Vagina (tissue), 2 donors: ENCODE measurements at regions of chr7 and their contacts with region 1.

Region 1: GRCh38 chr7:38902449-38902848 is 6.5 kb downstream of the VPS41 start:
- DNase-seq: no peak
- H3K4me3 ChIP-seq: no peak overlapping the region
- H3K27ac ChIP-seq: no peak overlapping the region
- H3K4me1 ChIP-seq: no peaks in the 10 kb centered on the region
- H3K27me3 ChIP-seq: no peaks in the 10 kb centered on the region
- CTCF ChIP-seq: no peak
- POLR2A ChIP-seq: no peak

Region 2: DNA sequence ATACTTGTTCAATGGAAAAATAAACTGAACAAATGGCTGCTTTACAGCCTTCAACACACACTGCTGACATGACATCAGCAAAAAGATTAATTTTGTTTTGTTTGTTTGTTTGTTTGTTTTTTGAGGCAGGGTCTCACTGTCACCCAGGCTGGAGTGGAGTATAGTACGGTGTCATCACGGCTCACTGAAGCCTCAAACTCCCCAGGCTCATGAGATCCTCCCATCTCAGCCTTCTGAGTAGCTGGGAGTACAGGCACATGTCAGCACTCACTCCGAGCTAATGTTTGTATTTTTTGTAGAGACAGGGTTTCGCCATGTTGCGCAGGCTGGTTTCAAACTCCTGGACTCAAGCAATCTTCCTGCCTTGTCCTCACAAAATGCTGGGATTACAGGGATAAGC is 639.9 kb before region 1 on chr7:
- intact Hi-C with region 1: no loop called
- DNase-seq: no peak
- H3K4me3 ChIP-seq: no peak overlapping the region
- H3K27ac ChIP-seq: no peak overlapping the region
- H3K4me1 ChIP-seq: no peaks in the 10 kb centered on the region
- H3K27me3 ChIP-seq: no peaks in the 10 kb centered on the region
- CTCF ChIP-seq: no peak
- POLR2A ChIP-seq: no peak

Region 3: GRCh38 chr7:38728145-38728544 is 174.3 kb before region 1 on chr7:
- intact Hi-C with region 1: loop called (anchors 5 kb)
- DNase-seq: no peak
- H3K4me3 ChIP-seq: no peak overlapping the region
- H3K27ac ChIP-seq: no peak overlapping the region
- H3K4me1 ChIP-seq: no peaks in the 10 kb centered on the region
- H3K27me3 ChIP-seq: no peaks in the 10 kb centered on the region
- CTCF ChIP-seq: no peak
- POLR2A ChIP-seq: no peak

Region 4: GRCh38 chr7:38858259-38859165 is 43.9 kb before region 1 on chr7:
- intact Hi-C with region 1: no loop called
- DNase-seq: no peak
- H3K4me3 ChIP-seq: no peak overlapping the region
- H3K27ac ChIP-seq: no peak overlapping the region
- H3K4me1 ChIP-seq: peaks cover 17% of the 10 kb centered on the region
- H3K27me3 ChIP-seq: no peaks in the 10 kb centered on the region
- CTCF ChIP-seq: no peak
- POLR2A ChIP-seq: no peak